HCT116 (cell line): ENCODE measurements at regions of chr5 and their contacts with region 1.

Region 1: GRCh38 chr5:39775458-39776365 is 350.9 kb upstream of the DAB2 start:
- DNase-seq: no peak
- ATAC-seq: no peak
- H3K4me3 ChIP-seq: no peak overlapping the region
- H3K27ac ChIP-seq: no peak overlapping the region
- H3K4me1 ChIP-seq: peaks cover 0 to 5% of the 10 kb centered on the region in 2 experiments; a peak in 1 of 4 replicates
- H3K27me3 ChIP-seq: no peaks in the 10 kb centered on the region
- CTCF ChIP-seq: no peak
- POLR2A ChIP-seq: no peak
- RAD21 ChIP-seq: no peak

Region 2: DNA sequence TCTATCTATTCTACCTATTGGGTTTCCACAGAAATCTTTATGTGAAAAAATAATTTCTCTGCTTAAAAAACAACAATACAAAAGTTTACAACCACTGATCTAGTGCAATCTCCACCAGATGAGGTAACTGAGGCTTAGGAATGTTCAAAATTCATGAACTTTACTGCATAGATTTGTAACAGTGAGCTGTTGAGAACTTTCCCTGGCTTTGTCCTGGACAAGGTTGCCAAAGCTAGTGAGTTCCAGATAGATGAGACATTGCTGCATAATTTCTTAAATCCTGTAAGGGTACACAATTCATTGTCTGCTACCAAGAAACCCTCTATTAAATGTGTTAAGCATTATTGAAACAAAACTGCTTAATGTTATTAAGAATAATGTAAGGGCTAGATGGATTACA is 827.2 kb before region 1 on chr5:
- CTCF ChIA-PET with region 1: no interaction called
- POLR2A ChIA-PET with region 1: no interaction called
- RAD21 ChIA-PET with region 1: no interaction called
- intact Hi-C with region 1: no loop called
- DNase-seq: no peak
- ATAC-seq: no peak
- H3K4me3 ChIP-seq: no peak overlapping the region
- H3K27ac ChIP-seq: no peak overlapping the region
- H3K4me1 ChIP-seq: no peaks in the 10 kb centered on the region
- H3K27me3 ChIP-seq: no peaks in the 10 kb centered on the region
- CTCF ChIP-seq: no peak
- POLR2A ChIP-seq: no peak
- RAD21 ChIP-seq: no peak

Region 3: DNA sequence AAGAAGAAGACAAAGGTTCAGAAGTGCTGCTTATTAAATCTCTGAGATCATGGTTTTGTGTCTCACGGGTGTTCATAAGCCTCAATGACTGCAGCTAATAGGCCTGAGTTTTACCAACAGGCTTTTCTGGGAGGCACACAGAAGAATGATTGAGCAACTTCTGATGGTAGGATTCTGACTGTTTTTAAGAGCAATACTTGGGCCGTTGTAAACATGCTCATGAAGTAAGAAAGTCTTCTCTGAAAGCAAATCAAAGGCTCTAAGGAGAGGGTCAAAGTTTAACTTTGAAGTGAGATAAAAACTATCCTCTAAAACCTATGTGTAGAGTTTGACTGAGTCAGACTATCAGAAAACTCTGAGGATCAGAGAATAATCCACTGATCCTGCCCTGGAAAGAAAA is 40.0 kb after region 1 on chr5:
- CTCF ChIA-PET with region 1: no interaction called
- POLR2A ChIA-PET with region 1: no interaction called
- RAD21 ChIA-PET with region 1: no interaction called
- intact Hi-C with region 1: loop called (anchors 1 kb)
- DNase-seq: no peak
- ATAC-seq: no peak
- H3K4me3 ChIP-seq: no peak overlapping the region
- H3K27ac ChIP-seq: no peak overlapping the region
- H3K4me1 ChIP-seq: no peaks in the 10 kb centered on the region
- H3K27me3 ChIP-seq: no peaks in the 10 kb centered on the region
- CTCF ChIP-seq: no peak
- POLR2A ChIP-seq: no peak
- RAD21 ChIP-seq: no peak

Region 4: DNA sequence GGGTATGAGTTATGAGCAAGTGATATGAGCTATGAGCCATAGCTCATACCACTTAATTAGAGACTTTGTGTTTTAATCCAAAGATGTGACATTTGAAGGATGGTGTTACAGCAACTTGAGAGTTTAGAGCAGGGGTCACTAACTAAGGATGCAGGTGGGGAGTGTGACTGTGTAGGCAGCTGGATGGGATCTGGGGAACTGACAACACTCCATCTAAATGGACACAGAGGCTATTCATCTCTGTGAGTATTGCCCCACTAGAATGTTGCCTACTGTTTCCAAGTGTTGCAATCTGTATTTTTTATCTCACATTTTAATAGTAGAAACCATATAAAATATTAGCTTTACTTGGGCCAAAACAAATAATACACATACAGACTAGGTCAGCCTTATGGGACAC is 137.2 kb after region 1 on chr5:
- CTCF ChIA-PET with region 1: no interaction called
- POLR2A ChIA-PET with region 1: no interaction called
- RAD21 ChIA-PET with region 1: no interaction called
- intact Hi-C with region 1: no loop called
- DNase-seq: no peak
- ATAC-seq: no peak
- H3K4me3 ChIP-seq: no peak overlapping the region
- H3K27ac ChIP-seq: no peak overlapping the region
- H3K4me1 ChIP-seq: no peaks in the 10 kb centered on the region
- H3K27me3 ChIP-seq: no peaks in the 10 kb centered on the region
- CTCF ChIP-seq: no peak
- POLR2A ChIP-seq: no peak
- RAD21 ChIP-seq: no peak